ENCODE measurements at regions of chr22 and their contacts with region 1.

Region 1: DNA sequence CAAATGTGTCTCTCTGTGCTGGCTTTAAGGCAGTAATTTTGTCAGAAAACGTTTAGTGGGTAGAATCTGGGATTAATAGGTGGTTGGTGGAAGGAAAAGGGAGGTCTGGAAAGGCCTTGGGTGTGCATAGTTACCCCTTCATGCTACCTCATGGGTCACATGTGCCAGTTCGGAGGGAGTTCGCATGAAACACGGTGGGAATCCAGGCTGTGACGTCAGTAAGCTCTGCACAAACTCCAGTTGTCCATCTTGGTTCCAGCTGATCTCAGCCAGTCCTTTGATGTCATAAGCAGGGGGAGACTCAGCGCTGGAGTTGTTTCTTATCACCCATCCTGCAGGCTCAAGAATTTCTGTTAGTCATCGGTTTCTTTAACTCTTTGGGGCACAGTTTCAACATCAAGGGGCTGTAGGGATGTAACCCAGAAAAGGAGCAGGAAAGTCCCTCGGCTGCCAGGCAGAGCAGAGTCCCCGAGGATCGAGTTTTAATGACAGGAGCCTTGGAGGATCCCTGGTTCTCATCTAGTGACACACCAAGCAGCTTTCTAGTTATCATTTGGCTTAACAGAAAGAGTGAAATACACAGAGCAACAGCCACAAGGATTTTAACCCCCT is 28.9 kb downstream of the MOV10L1 start:
- DNase-seq: peak; percentile 85 to 94 (median 90)
- H3K4me3 ChIP-seq: no peak overlapping the region
- H3K27ac ChIP-seq: peak overlapping the region in 1 of 2 experiments; percentile 55
- H3K4me1 ChIP-seq: peaks cover 0 to 14% (median 4%) of the 10 kb centered on the region in 4 experiments
- H3K27me3 ChIP-seq: peaks cover 0 to 2% (median 0%) of the 10 kb centered on the region in 5 experiments

Region 2: DNA sequence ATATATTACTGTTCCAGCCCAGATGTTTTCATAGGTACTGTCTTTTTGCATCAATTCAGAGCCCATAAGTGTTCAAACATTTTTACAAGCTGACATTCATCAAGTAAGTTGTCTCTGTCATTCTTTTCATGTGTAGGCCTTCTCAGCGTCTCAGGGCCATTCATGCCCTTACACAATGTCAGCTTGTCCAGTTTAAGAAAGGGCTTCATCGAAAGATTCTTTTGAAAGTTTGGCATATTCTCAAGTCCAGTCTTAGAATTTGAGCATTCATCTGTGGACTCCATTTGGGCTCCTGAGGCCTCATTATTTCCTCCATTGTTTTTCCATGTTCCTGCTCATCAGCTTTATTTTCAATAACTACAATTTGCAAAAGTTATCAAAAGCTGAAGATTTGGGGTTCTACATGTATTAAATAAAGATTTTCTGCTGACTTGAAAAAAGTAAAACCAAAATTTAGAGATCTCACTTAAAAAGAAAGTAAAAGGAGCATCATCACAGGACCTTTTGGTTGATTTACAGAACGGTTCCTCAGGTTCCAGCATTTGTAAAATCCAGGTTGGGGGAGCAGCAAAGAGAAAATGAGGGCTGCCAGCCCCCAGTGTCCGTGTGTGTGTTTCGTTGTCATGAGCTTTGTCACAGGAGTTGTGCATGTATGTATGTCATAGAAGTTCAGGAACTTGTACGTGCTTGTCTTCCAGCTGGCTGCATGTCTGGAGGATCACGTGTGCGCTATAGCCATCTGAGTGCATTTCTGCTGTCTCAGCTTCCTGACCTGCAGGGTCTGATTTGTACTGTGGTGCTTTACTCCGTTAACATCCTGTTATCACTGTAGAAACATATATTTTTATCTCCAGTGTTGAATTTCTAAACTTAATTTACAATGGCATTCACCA is 13.2 kb before region 1 on chr22:
- CTCF ChIA-PET with region 1: interaction called, 23 read pairs
- POLR2A ChIA-PET with region 1: no interaction called
- DNase-seq: peak; percentile 62 to 92 (median 86)
- H3K4me3 ChIP-seq: peak overlapping the region in 5 of 7 experiments; percentile 24 to 75 (median 46)
- H3K27ac ChIP-seq: no peak overlapping the region
- H3K4me1 ChIP-seq: peaks cover 6 to 45% (median 22%) of the 10 kb centered on the region in 4 experiments
- H3K27me3 ChIP-seq: no peaks in the 10 kb centered on the region

Region 3: DNA sequence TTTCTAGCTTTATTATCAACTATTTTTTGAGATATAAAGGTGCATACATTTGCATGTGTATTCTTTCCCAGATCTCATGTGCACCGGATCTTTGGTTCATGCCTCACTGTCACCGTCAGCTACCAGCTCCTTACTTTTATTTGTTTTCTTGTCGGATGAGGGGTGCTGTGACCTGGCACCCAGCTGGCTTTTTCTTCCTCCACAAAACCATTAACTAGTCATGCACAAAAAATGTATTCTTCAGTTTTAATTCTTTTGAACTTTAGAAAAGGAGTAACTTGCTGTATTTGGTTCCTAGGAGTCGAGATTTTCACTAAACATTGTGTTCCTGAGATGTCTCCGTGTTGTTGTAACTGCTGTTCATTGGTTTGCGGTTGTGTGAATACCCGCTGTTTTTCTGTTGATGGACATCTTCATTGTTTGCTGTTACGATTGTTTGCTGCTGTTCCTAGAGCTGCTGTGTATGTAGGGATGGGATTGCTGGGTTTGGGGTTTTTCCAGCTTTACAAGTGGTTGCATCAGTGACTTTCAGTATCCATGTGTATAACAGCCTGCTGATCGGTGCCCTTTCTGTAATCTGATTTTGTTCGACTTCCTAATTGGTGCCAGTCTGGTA is 10.6 kb after region 1 on chr22:
- CTCF ChIA-PET with region 1: interaction called, 11 read pairs
- POLR2A ChIA-PET with region 1: no interaction called
- DNase-seq: no peak
- H3K4me3 ChIP-seq: no peak overlapping the region
- H3K27ac ChIP-seq: no peak overlapping the region
- H3K4me1 ChIP-seq: peaks cover 0 to under 1% (median 0%) of the 10 kb centered on the region in 4 experiments
- H3K27me3 ChIP-seq: no peaks in the 10 kb centered on the region